H1 (cell line): ENCODE measurements at regions of chr11 and their contacts with region 1.

Region 1: DNA sequence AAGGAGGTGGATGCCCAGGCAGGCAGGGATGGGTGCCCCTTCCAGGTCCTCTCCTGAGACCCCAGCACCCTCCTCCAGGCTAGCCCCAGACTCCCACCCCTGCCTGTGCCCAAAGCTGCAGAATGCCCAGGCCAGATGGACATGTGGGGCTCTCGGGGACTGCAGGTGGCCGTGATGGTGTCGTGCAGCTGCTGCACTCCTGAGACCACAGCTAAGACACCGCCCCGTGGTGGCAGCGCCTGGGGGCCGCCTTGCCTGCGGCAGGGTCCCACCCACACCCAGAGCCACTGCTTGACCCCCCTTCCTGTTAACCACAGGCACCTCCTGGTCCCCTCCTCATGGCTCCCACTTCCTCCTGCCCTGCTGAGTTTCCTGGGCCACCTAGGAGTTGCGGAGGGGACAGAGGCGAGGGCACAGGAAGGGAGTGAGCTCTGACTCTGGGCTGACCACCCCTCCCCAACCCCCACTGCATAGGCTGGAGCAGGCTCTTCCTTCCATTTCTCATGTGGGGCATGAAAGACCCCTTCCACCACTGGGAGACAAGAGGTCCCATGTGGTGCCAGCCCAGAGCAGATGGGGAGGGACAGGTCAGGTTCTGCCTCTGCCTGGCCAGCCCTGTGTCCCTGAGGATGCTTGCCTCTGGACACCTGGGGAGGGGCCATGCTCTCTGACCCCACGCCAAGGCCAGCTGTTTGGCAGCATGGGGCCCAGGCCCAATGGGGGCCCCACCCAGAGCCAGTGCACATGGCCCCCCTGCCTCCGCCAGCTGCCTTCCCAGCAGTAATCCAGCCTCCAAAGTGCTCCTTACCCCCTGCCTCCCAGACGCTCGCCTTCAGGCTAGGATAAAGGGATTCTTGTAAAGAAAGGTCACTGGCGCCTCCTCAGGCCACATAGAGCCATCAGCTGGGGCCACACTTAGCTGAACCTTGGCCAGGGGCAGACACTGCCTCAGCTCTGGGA is 29.3 kb downstream of the OSBPL5 start:
- DNase-seq: no peak
- H3K4me3 ChIP-seq: no peak overlapping the region
- H3K27ac ChIP-seq: no peak overlapping the region
- H3K4me1 ChIP-seq: peaks cover 0 to 9% (median 5%) of the 10 kb centered on the region in 4 experiments; a peak in 4 of 7 replicates
- H3K27me3 ChIP-seq: no peaks in the 10 kb centered on the region
- CTCF ChIP-seq: peak in 2 of 3 experiments; percentile 63 to 70; a peak in 3 of 4 replicates
- EP300 ChIP-seq: no peak
- POLR2A ChIP-seq: no peak
- RAD21 ChIP-seq: peak; percentile 46 to 68

Region 2: DNA sequence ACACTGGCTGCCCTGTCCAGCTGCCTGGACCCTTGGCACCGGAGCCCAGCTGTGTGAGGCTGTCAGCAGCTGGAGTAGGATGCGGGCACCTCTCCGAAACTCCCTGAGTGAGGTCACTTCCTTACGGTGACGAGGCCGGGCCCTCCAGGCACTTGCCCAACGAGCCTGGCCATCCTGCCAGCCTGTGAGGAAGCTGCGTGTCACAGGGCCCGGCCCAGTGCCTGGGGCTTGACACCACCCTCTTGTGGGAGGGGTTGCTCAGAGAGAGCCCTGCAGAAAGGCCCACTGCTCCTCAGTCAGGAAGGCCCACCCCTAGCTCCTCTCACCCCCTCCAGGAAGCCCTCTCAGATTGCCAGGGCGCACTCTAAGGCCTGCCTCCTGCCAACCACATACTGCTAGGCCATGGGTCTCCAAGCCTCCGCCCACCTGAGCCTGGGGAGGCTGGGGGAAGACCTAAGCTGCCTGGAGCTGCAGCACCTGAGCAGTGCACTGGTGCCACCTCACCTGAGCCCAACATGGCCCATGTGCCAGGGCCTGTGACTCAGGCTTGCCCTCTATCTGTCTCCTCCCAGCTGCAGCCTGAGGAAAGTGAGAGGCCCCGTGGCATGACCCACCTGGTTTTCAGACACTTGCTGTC is 202.3 kb before region 1 on chr11:
- CTCF ChIA-PET with region 1: no interaction called
- POLR2A ChIA-PET with region 1: no interaction called
- DNase-seq: peak; percentile 38 to 56
- H3K4me3 ChIP-seq: no peak overlapping the region
- H3K27ac ChIP-seq: no peak overlapping the region
- H3K4me1 ChIP-seq: peaks cover 0 to 9% (median 2%) of the 10 kb centered on the region in 4 experiments; a peak in 5 of 7 replicates
- H3K27me3 ChIP-seq: peaks cover 12 to 16% (median 15%) of the 10 kb centered on the region in 4 experiments
- CTCF ChIP-seq: no peak
- EP300 ChIP-seq: no peak
- POLR2A ChIP-seq: no peak
- RAD21 ChIP-seq: no peak

Region 3: DNA sequence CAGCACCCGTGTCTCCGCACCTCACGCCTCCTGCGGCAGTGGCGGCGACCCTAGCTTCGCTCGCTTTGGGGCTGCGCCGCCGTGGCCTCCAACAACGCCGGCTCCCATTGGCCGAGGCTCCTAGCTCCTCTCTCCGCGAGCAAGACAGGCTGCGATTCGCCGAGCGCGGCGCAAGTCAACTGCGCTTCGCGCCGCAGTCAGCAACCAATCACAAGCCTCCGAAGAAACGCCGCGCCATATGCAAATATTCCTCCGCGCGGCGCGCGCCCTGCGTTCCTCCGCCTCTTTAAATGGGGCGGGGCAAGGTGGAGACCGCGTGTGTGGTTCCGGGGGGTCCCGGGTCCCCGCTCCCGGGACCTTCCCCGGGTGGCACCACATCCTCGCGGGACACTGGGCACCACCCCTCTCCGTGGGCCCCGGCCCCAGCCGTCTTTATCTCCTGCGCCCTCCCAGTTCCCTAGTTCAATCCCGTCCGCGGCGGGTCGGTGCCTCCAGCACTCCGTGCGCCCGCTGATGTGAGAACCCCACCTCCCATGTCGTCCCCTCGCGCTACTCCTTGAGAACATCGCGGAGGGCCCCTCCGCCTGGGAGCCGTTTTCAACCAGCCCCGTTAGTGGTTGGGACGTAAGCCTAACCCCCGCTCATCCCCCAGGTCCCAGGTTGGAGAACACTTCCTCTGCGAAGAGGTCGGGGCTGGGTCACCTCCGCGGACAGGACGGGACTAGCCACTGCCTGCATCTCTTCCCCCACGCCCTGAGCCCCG is 143.3 kb before region 1 on chr11 and contains the start of gene NAP1L4:
- CTCF ChIA-PET with region 1: no interaction called
- POLR2A ChIA-PET with region 1: no interaction called
- DNase-seq: peak; percentile 93
- H3K4me3 ChIP-seq: peak within 1 kb of the TSS; percentile 76 to 89 (median 86)
- H3K27ac ChIP-seq: peak within 1 kb of the TSS; percentile 90
- H3K4me1 ChIP-seq: peaks cover 6 to 18% (median 8%) of the 10 kb centered on the region in 4 experiments
- H3K27me3 ChIP-seq: no peaks in the 10 kb centered on the region
- CTCF ChIP-seq: no peak; a peak in 1 of 4 replicates
- EP300 ChIP-seq: no peak
- POLR2A ChIP-seq: peak; percentile 60 to 82
- RAD21 ChIP-seq: no peak
- total RNA-seq, gene NAP1L4: 190 and 194 TPM in 2 replicates

Region 4: GRCh38 chr11:3073029-3073435 is 62.7 kb before region 1 on chr11:
- CTCF ChIA-PET with region 1: no interaction called
- POLR2A ChIA-PET with region 1: no interaction called
- DNase-seq: no peak
- H3K4me3 ChIP-seq: no peak overlapping the region
- H3K27ac ChIP-seq: no peak overlapping the region
- H3K4me1 ChIP-seq: no peaks in the 10 kb centered on the region
- H3K27me3 ChIP-seq: no peaks in the 10 kb centered on the region
- CTCF ChIP-seq: no peak
- EP300 ChIP-seq: no peak
- POLR2A ChIP-seq: no peak
- RAD21 ChIP-seq: no peak

Region 5: GRCh38 chr11:3146612-3147256 is 11.0 kb after region 1 on chr11:
- CTCF ChIA-PET with region 1: interaction called, 23 read pairs
- POLR2A ChIA-PET with region 1: interaction called, 4 read pairs
- DNase-seq: no peak
- H3K4me3 ChIP-seq: no peak overlapping the region
- H3K27ac ChIP-seq: no peak overlapping the region
- H3K4me1 ChIP-seq: peaks cover 0 to 7% (median 1%) of the 10 kb centered on the region in 4 experiments; a peak in 4 of 7 replicates
- H3K27me3 ChIP-seq: no peaks in the 10 kb centered on the region
- CTCF ChIP-seq: no peak
- EP300 ChIP-seq: no peak
- POLR2A ChIP-seq: no peak
- RAD21 ChIP-seq: no peak

Region 6: GRCh38 chr11:3153291-3153861 is 17.6 kb after region 1 on chr11:
- CTCF ChIA-PET with region 1: interaction called, 23 read pairs
- POLR2A ChIA-PET with region 1: interaction called, 3 read pairs
- DNase-seq: no peak
- H3K4me3 ChIP-seq: no peak overlapping the region
- H3K27ac ChIP-seq: no peak overlapping the region
- H3K4me1 ChIP-seq: peaks cover 0 to 25% (median 16%) of the 10 kb centered on the region in 4 experiments; a peak in 6 of 7 replicates
- H3K27me3 ChIP-seq: no peaks in the 10 kb centered on the region; a peak in 1 of 7 replicates
- CTCF ChIP-seq: no peak
- EP300 ChIP-seq: no peak
- POLR2A ChIP-seq: no peak
- RAD21 ChIP-seq: no peak

Region 7: GRCh38 chr11:3222941-3223915 is 87.5 kb after region 1 on chr11:
- CTCF ChIA-PET with region 1: interaction called, 11 read pairs
- POLR2A ChIA-PET with region 1: no interaction called
- DNase-seq: no peak
- H3K4me3 ChIP-seq: no peak overlapping the region
- H3K27ac ChIP-seq: no peak overlapping the region
- H3K4me1 ChIP-seq: peaks cover 0 to 23% (median 10%) of the 10 kb centered on the region in 4 experiments; a peak in 6 of 7 replicates
- H3K27me3 ChIP-seq: no peaks in the 10 kb centered on the region
- CTCF ChIP-seq: no peak
- EP300 ChIP-seq: no peak
- POLR2A ChIP-seq: no peak
- RAD21 ChIP-seq: no peak